ENCODE measurements at regions of chr5 and their contacts with region 1.

Region 1: GRCh38 chr5:1799602-1800471 is at the start of gene MRPL36:
- DNase-seq: peak; percentile 84
- H3K4me3 Mint-ChIP-seq: peak within 1 kb of the TSS; percentile 96
- H3K27ac Mint-ChIP-seq: peak within 1 kb of the TSS; percentile 97
- H3K4me1 Mint-ChIP-seq: peaks cover 38% of the 10 kb centered on the region
- H3K27me3 Mint-ChIP-seq: no peaks in the 10 kb centered on the region
- total RNA-seq, gene MRPL36: 96.1 and 96.4 TPM in 2 replicates

Region 2: GRCh38 chr5:1385395-1386273 is 414.2 kb before region 1 on chr5:
- intact Hi-C with region 1: loop called (anchors 5 kb)
- DNase-seq: peak; percentile 83
- H3K4me3 Mint-ChIP-seq: peak overlapping the region; percentile 95
- H3K27ac Mint-ChIP-seq: peak overlapping the region; percentile 98
- H3K4me1 Mint-ChIP-seq: peaks cover 16% of the 10 kb centered on the region
- H3K27me3 Mint-ChIP-seq: peaks cover 25% of the 10 kb centered on the region

Measured in activated T-helper 2 cell treated with anti-CD3 and anti-CD28 coated beads, Interferon-gamma antibody, Interleukin-2, Interleukin-4, amounts not matched to agents 10 μg/mL and 5 μg/mL and 100 μg/mL, durations not matched to agents 14 hours and 24 hours and 36 hours (primary cell).